Cardiac septum (tissue), 1 donor: ENCODE measurements at regions of chr6 and their contacts with region 1.

Region 1: GRCh38 chr6:103273048-103273447 is 1586.7 kb downstream of the HACE1 start:
- DNase-seq: no peak

Region 2: DNA sequence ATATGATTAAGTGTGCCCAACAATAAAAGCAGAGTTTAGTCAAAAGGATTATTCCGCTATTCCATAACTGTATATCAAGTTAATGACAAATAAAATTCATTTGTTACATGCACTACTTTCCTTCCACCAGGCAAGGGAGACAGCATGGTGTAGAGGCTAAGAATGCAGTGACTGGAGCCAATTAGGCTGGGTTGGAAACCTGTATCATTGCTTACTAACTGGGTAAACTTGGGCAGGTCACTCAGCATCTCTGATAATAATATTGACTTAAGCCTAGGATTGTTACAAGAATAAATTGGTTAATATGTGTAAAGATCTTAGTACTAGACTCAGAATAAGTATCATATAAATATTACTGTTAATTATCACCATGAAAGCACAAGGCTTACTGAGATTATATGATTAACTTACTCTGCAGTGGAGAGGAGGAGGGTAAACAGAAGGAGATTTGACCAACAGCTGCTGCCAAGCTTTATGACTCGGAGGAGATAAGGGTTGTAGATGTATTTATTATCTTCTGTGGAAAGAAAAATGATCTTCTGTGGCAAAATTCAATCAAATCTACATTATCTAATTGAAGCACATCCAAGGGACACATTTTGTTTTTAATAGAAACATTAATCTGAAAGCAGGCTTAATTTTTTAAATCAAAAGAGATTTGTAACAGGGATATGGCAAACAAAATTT is 419.6 kb before region 1 on chr6:
- intact Hi-C with region 1: loop called (anchors 5 kb)
- DNase-seq: no peak

Region 3: GRCh38 chr6:103142902-103143301 is 130.1 kb before region 1 on chr6:
- intact Hi-C with region 1: no loop called
- DNase-seq: no peak

Region 4: DNA sequence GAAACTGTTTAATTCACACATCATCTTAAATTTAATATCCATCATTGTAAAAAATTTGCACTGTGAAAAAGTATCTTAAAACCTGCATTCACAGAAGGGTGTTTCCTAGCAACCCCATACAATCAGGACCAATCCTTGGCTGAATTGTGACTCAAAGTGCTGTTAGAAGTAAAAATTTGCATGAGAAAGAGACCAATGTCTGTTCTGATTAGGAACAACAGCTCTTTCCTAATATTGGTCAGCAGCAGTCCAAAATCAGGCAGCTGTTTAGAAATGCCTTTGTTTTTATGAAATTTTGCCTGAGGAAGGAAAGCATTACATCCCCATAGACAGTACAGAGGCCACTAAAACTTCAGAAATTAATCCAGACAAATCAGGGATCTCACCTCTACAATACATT is 599.6 kb after region 1 on chr6:
- intact Hi-C with region 1: no loop called
- DNase-seq: no peak